PC-3 (cell line): ENCODE measurements at regions of chr17 and their contacts with region 1.

Region 1: GRCh38 chr17:46097497-46097896 is 95.7 kb downstream of the KANSL1 start:
- DNase-seq: no peak
- ATAC-seq: no peak
- H3K4me3 ChIP-seq: no peak overlapping the region
- H3K27ac ChIP-seq: no peak overlapping the region
- H3K4me1 ChIP-seq: peaks cover 9% of the 10 kb centered on the region
- H3K27me3 ChIP-seq: no peaks in the 10 kb centered on the region
- CTCF ChIP-seq: no peak

Region 2: GRCh38 chr17:45894022-45894784 is 203.3 kb before region 1 on chr17 and contains the start of gene MAPT:
- CTCF ChIA-PET with region 1: no interaction called
- POLR2A ChIA-PET with region 1: no interaction called
- intact Hi-C with region 1: no loop called
- DNase-seq: peak; percentile 98
- ATAC-seq: peak; percentile 96
- H3K4me3 ChIP-seq: peak within 1 kb of the TSS; percentile 81
- H3K27ac ChIP-seq: no peak within 1 kb of the TSS
- H3K4me1 ChIP-seq: peaks cover 11% of the 10 kb centered on the region
- H3K27me3 ChIP-seq: peaks cover 22% of the 10 kb centered on the region
- CTCF ChIP-seq: peak; percentile 91
- total RNA-seq, gene MAPT: 2.7 and 3.6 TPM in 2 replicates

Region 3: DNA sequence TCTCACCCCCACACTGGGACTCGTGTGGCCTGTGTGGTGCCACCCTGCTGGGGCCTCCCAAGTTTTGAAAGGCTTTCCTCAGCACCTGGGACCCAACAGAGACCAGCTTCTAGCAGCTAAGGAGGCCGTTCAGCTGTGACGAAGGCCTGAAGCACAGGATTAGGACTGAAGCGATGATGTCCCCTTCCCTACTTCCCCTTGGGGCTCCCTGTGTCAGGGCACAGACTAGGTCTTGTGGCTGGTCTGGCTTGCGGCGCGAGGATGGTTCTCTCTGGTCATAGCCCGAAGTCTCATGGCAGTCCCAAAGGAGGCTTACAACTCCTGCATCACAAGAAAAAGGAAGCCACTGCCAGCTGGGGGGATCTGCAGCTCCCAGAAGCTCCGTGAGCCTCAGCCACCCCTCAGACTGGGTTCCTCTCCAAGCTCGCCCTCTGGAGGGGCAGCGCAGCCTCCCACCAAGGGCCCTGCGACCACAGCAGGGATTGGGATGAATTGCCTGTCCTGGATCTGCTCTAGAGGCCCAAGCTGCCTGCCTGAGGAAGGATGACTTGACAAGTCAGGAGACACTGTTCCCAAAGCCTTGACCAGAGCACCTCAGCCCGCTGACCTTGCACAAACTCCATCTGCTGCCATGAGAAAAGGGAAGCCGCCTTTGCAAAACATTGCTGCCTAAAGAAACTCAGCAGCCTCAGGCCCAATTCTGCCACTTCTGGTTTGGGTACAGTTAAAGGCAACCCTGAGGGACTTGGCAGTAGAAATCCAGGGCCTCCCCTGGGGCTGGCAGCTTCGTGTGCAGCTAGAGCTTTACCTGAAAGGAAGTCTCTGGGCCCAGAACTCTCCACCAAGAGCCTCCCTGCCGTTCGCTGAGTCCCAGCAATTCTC is 71.1 kb before region 1 on chr17:
- CTCF ChIA-PET with region 1: no interaction called
- POLR2A ChIA-PET with region 1: no interaction called
- intact Hi-C with region 1: no loop called
- DNase-seq: no peak
- ATAC-seq: no peak
- H3K4me3 ChIP-seq: no peak overlapping the region
- H3K27ac ChIP-seq: no peak overlapping the region
- H3K4me1 ChIP-seq: no peaks in the 10 kb centered on the region
- H3K27me3 ChIP-seq: no peaks in the 10 kb centered on the region
- CTCF ChIP-seq: no peak

Region 4: DNA sequence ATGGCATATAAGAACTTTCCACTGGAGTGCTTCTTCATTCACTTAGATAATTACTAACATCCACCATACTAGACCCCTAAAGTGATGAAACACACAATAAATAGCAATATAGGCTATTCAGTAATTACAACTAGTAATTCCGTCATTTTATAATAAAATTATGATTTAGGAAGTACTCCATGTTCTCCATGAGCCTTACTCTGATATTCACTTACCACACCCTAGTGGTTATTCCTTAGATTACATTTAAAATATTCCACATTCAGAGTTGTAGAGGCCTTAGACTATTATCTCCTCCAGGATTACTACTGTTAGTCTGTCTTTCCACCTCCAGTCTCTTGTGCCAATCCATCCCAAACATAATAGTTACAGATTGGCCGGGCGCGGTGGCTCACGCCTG is 36.1 kb before region 1 on chr17:
- CTCF ChIA-PET with region 1: no interaction called
- POLR2A ChIA-PET with region 1: no interaction called
- intact Hi-C with region 1: loop called (anchors 5 kb)
- DNase-seq: peak; percentile 69
- ATAC-seq: no peak
- H3K4me3 ChIP-seq: no peak overlapping the region
- H3K27ac ChIP-seq: no peak overlapping the region
- H3K4me1 ChIP-seq: peaks cover 37% of the 10 kb centered on the region
- H3K27me3 ChIP-seq: no peaks in the 10 kb centered on the region
- CTCF ChIP-seq: peak; percentile 68

Region 5: GRCh38 chr17:46078675-46079074 is 18.8 kb before region 1 on chr17:
- CTCF ChIA-PET with region 1: no interaction called
- POLR2A ChIA-PET with region 1: no interaction called
- intact Hi-C with region 1: loop called (anchors 2 kb)
- DNase-seq: no peak
- ATAC-seq: no peak
- H3K4me3 ChIP-seq: no peak overlapping the region
- H3K27ac ChIP-seq: no peak overlapping the region
- H3K4me1 ChIP-seq: 0 out of 2 replicates have a peak, but pooled peaks cover under 1% of the 10 kb centered on the region
- H3K27me3 ChIP-seq: no peaks in the 10 kb centered on the region
- CTCF ChIP-seq: no peak

Region 6: GRCh38 chr17:46121841-46122485 is 24.5 kb after region 1 on chr17:
- CTCF ChIA-PET with region 1: no interaction called
- POLR2A ChIA-PET with region 1: no interaction called
- intact Hi-C with region 1: no loop called
- DNase-seq: no peak
- ATAC-seq: no peak
- H3K4me3 ChIP-seq: no peak overlapping the region
- H3K27ac ChIP-seq: no peak overlapping the region
- H3K4me1 ChIP-seq: no peaks in the 10 kb centered on the region
- H3K27me3 ChIP-seq: no peaks in the 10 kb centered on the region
- CTCF ChIP-seq: no peak